Vagina (tissue), 2 donors: ENCODE measurements at regions of chr11 and their contacts with region 1.

Region 1: GRCh38 chr11:601573-602245 is 14.0 kb downstream of the IRF7 start:
- DNase-seq: no peak
- H3K4me3 ChIP-seq: no peak overlapping the region
- H3K27ac ChIP-seq: no peak overlapping the region
- H3K4me1 ChIP-seq: no peaks in the 10 kb centered on the region
- H3K27me3 ChIP-seq: no peaks in the 10 kb centered on the region
- CTCF ChIP-seq: no peak
- POLR2A ChIP-seq: no peak

Region 2: DNA sequence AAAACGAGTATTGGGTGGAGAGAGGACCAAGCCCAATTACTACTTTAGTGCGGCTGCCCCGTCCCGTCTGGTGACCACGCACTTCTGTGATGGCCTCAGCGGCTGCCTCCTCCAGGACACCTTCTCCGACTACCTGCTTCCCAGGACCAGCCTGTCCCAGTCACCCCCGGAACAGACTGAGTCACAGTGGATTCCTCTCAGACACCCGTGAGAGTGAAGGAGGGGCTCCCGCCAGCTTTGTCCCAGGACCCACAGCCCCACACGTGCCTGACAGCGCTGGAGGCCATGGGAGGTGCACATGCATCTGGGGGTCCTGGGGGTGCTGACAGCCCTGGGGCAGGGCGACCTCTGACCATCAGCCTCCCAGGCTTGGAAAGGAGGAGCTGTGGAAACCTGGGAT is 40.1 kb after region 1 on chr11:
- intact Hi-C with region 1: loop called (anchors 1 kb)
- DNase-seq: no peak
- H3K4me3 ChIP-seq: no peak overlapping the region
- H3K27ac ChIP-seq: no peak overlapping the region
- H3K4me1 ChIP-seq: peaks cover 9% of the 10 kb centered on the region
- H3K27me3 ChIP-seq: no peaks in the 10 kb centered on the region
- CTCF ChIP-seq: no peak
- POLR2A ChIP-seq: no peak

Region 3: DNA sequence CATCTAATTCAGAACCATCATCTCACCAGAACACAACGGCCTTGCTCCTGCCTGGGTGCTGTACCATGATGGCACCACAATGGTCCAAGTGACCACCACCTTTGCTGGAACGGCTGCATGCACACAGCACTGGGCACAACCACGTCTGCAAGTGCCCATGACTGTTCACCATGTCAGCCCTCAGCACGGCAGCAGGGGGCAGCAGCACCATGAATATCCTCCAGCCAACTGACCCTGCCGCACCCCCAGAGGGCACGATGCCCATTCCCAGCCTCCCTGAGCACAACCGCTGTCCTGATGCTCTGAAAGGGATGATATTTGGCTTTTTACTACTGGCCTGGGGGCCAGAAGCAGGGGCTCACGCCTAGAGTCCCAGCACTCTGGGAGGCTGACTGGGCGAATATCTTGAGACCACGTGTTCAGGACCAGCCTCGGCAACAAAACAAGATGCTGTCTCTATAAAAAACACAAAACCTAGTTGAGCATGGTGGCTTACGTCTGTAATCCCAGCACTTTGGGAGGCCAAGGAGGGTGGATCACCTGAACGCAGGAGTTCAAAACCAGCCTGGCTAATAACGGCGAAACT is 61.1 kb after region 1 on chr11:
- intact Hi-C with region 1: no loop called
- DNase-seq: no peak
- H3K4me3 ChIP-seq: no peak overlapping the region
- H3K27ac ChIP-seq: no peak overlapping the region
- H3K4me1 ChIP-seq: peaks cover 17% of the 10 kb centered on the region
- H3K27me3 ChIP-seq: no peaks in the 10 kb centered on the region
- CTCF ChIP-seq: peak; percentile 41 to 73 (median 69)
- POLR2A ChIP-seq: no peak